Activated naive CD4-positive, alpha-beta T cell treated with anti-CD3 and anti-CD28 coated beads, Interleukin-2, amount 10 ng/mL, durations not matched to agents 7 days and 5 days (primary cell): ENCODE measurements at regions of chr17 and their contacts with region 1.

Region 1: GRCh38 chr17:43760254-43760852 is 1.8 kb upstream of the SOST start:
- DNase-seq: peak; percentile 95
- H3K4me3 Mint-ChIP-seq: no peak overlapping the region
- H3K27ac Mint-ChIP-seq: no peak overlapping the region
- H3K4me1 Mint-ChIP-seq: peaks cover 5% of the 10 kb centered on the region
- H3K27me3 Mint-ChIP-seq: peaks cover 45% of the 10 kb centered on the region

Region 2: GRCh38 chr17:43576563-43577229 is 183.7 kb before region 1 on chr17:
- CTCF ChIA-PET with region 1: interaction called, 51 read pairs
- DNase-seq: peak; percentile 75
- H3K4me3 Mint-ChIP-seq: no peak overlapping the region
- H3K27ac Mint-ChIP-seq: no peak overlapping the region
- H3K4me1 Mint-ChIP-seq: peaks cover 20% of the 10 kb centered on the region
- H3K27me3 Mint-ChIP-seq: peaks cover 8% of the 10 kb centered on the region

Region 3: GRCh38 chr17:43648916-43649315 is 111.4 kb before region 1 on chr17:
- CTCF ChIA-PET with region 1: no interaction called
- DNase-seq: no peak
- H3K4me3 Mint-ChIP-seq: no peak overlapping the region
- H3K27ac Mint-ChIP-seq: no peak overlapping the region
- H3K4me1 Mint-ChIP-seq: peaks cover 31% of the 10 kb centered on the region
- H3K27me3 Mint-ChIP-seq: peaks cover 42% of the 10 kb centered on the region

Region 4: GRCh38 chr17:43694077-43694870 is 66.1 kb before region 1 on chr17:
- CTCF ChIA-PET with region 1: interaction called, 445 read pairs
- DNase-seq: peak; percentile 85
- H3K4me3 Mint-ChIP-seq: no peak overlapping the region
- H3K27ac Mint-ChIP-seq: no peak overlapping the region
- H3K4me1 Mint-ChIP-seq: no peaks in the 10 kb centered on the region
- H3K27me3 Mint-ChIP-seq: peaks cover 24% of the 10 kb centered on the region

Region 5: GRCh38 chr17:43713494-43714162 is 46.7 kb before region 1 on chr17:
- CTCF ChIA-PET with region 1: interaction called, 11 read pairs
- DNase-seq: peak; percentile 33
- H3K4me3 Mint-ChIP-seq: peak overlapping the region; percentile 35
- H3K27ac Mint-ChIP-seq: no peak overlapping the region
- H3K4me1 Mint-ChIP-seq: peaks cover 15% of the 10 kb centered on the region
- H3K27me3 Mint-ChIP-seq: peaks cover 84% of the 10 kb centered on the region